PC-3 (cell line): ENCODE measurements at regions of chr6 and their contacts with region 1.

Region 1: GRCh38 chr6:169723200-169723909 is 945 bp downstream of the PHF10 start:
- DNase-seq: peak; percentile 29
- ATAC-seq: peak; percentile 20
- H3K4me3 ChIP-seq: peak overlapping the region; percentile 75
- H3K27ac ChIP-seq: peak overlapping the region; percentile 70
- H3K4me1 ChIP-seq: peaks cover 13% of the 10 kb centered on the region
- H3K27me3 ChIP-seq: no peaks in the 10 kb centered on the region
- CTCF ChIP-seq: no peak

Region 2: DNA sequence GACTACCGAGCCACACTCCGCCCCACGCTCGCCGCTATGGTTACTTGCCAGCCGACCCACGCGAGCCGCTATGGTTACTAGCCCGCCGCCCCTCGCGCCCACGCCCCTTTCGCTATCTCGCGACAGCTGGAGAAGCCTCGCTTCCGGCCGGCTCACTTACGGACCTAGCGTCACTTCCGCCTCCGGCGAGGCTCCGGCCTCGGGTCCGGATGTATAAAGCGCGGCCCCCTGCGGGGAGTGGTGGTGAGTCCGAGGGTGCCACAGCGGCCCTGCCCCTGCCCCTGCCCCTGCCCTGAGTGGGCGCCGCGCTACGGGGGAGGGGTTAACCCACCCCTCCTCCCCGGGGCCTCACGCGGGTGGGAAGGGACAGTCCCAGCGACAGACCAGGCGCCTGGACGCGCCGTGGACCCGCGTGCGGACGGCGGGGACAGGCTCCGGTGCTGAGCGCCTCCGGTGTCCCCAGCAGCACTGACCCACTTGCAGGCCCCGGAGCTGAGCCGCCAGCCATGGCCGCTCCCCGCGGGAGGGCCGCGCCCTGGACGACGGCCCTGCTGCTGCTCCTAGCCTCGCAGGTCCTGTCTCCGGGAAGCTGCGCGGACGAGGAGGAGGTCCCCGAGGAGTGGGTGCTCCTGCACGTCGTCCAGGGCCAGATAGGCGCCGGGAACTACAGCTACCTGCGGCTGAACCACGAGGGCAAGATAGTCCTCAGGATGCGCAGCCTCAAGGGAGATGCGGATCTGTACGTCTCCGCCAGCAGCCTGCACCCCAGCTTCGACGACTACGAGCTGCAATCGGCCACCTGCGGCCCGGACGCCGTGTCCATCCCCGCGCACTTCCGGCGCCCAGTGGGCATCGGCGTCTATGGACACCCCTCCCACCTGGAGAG is 21.2 kb before region 1 on chr6 and contains the starts of genes C6orf120 and WDR27:
- CTCF ChIA-PET with region 1: no interaction called
- POLR2A ChIA-PET with region 1: interaction called, 6 read pairs
- intact Hi-C with region 1: loop called (anchors 2 kb)
- DNase-seq: peak; percentile 93
- ATAC-seq: peak; percentile 88
- H3K4me3 ChIP-seq: peak within 1 kb of the TSS; percentile 98
- H3K27ac ChIP-seq: peak within 1 kb of the TSS; percentile 75
- H3K4me1 ChIP-seq: peaks cover 23% of the 10 kb centered on the region
- H3K27me3 ChIP-seq: no peaks in the 10 kb centered on the region
- CTCF ChIP-seq: no peak
- total RNA-seq, gene C6orf120: 17.0 and 18.6 TPM in 2 replicates
- total RNA-seq, gene WDR27: 20.0 and 28.3 TPM in 2 replicates

Region 3: GRCh38 chr6:169751242-169752073 is 28.1 kb after region 1 on chr6 and contains the starts of genes DYNLT2 and ERMARD:
- CTCF ChIA-PET with region 1: no interaction called
- POLR2A ChIA-PET with region 1: no interaction called
- intact Hi-C with region 1: loop called (anchors 2 kb)
- DNase-seq: peak; percentile 92
- ATAC-seq: peak; percentile 90
- H3K4me3 ChIP-seq: peak within 1 kb of the TSS; percentile 83
- H3K27ac ChIP-seq: peak within 1 kb of the TSS; percentile 70
- H3K4me1 ChIP-seq: peaks cover 8% of the 10 kb centered on the region; the same call in 1 of the 2 replicates
- H3K27me3 ChIP-seq: no peaks in the 10 kb centered on the region
- CTCF ChIP-seq: no peak
- total RNA-seq, gene DYNLT2: 0.51 and 1.5 TPM in 2 replicates
- total RNA-seq, gene ERMARD: 16.3 and 24.2 TPM in 2 replicates

Region 4: GRCh38 chr6:169766232-169766631 is 42.9 kb after region 1 on chr6:
- CTCF ChIA-PET with region 1: no interaction called
- POLR2A ChIA-PET with region 1: no interaction called
- intact Hi-C with region 1: no loop called
- DNase-seq: no peak
- ATAC-seq: no peak
- H3K4me3 ChIP-seq: no peak overlapping the region
- H3K27ac ChIP-seq: no peak overlapping the region
- H3K4me1 ChIP-seq: no peaks in the 10 kb centered on the region
- H3K27me3 ChIP-seq: no peaks in the 10 kb centered on the region
- CTCF ChIP-seq: no peak

Region 5: DNA sequence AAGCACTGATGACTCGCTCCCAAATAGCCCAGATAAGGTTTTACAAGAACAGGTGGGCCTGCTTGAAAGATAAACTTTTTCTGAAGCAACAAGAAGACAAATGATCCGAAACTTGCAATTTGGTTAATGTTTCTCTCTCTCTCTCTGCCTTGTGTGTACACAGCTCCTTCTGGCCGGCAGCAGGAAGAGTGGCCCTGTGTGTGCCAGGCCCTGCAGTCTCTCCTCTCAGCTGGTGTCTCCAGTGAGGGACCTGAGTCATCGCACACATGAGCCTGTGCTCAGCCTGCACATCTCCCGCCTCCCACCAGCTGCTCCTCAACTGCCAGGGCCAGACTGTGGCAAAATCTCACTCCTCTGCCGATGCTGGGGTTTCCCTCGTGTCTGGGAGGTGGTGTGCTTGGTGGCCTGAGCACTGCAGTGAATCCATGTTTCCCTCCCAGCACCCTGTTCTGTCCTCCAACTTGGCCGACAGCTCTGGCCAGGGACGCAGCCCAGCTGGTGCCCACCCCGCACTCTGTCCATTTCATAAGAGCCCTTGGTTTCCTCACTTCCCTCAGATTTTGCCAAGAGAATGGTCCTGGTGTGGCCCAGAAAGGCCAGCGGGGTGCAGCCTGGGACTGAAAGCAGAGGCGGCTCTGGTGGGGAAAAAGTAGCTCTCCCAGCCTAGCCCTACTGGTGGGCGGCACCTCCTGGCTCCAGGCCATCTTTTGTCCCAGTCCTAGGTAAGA is 77.5 kb after region 1 on chr6:
- CTCF ChIA-PET with region 1: no interaction called
- POLR2A ChIA-PET with region 1: no interaction called
- intact Hi-C with region 1: no loop called
- DNase-seq: peak; percentile 64
- ATAC-seq: peak; percentile 98
- H3K4me3 ChIP-seq: no peak overlapping the region
- H3K27ac ChIP-seq: no peak overlapping the region
- H3K4me1 ChIP-seq: peaks cover 18% of the 10 kb centered on the region
- H3K27me3 ChIP-seq: no peaks in the 10 kb centered on the region
- CTCF ChIP-seq: no peak

Region 6: GRCh38 chr6:170554013-170554795 is 830.8 kb after region 1 on chr6 and contains the start of gene TBP:
- CTCF ChIA-PET with region 1: no interaction called
- POLR2A ChIA-PET with region 1: no interaction called
- intact Hi-C with region 1: loop called (anchors 10 kb)
- DNase-seq: peak; percentile 95
- ATAC-seq: peak; percentile 91
- H3K4me3 ChIP-seq: peak within 1 kb of the TSS; percentile 97
- H3K27ac ChIP-seq: peak within 1 kb of the TSS; percentile 85
- H3K4me1 ChIP-seq: peaks cover 30% of the 10 kb centered on the region; the same call in 1 of the 2 replicates
- H3K27me3 ChIP-seq: no peaks in the 10 kb centered on the region
- CTCF ChIP-seq: no peak
- total RNA-seq, gene TBP: 12.8 and 15.7 TPM in 2 replicates